Left ventricle myocardium superior (tissue), 1 donor: ENCODE measurements at regions of chr5 and their contacts with region 1.

Region 1: DNA sequence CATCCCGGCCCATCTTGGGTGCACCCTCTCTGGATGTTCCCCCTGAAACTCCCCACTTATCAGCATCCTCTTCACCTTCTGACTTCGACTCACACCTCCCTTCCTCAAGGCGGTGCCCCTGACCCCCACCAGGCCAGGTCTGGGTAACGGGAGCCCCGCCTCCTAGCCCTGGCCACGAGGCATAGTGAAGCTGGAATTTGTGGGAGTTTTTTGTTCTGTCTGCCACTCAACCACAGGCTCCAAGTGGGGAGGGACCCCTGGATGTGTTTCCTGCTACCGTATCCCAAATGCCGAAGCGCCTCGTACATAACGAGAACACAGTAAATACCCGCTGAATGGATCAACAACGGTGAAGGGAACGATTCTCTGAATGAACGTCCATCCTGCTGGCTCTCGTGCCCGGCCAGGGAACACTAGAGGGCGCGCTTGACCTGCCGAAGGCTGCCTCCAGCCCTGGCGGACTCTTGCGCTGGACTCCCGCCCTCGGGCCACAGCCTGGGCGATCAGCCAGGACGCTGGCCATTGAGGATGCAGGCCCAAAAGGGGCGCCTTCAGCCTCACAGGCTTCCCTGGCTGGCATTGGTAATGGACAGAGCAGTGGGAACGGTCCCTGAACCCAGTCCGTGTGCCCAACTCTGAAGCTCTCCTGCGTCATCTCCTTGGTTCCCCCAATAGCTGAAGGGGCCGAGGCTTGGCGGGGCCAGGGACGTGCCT is 47.3 kb upstream of the PHYKPL start:
- DNase-seq: peak; percentile 95
- ATAC-seq: peak; percentile 91

Region 2: GRCh38 chr5:178336889-178337288 is 57.0 kb after region 1 on chr5:
- intact Hi-C with region 1: no loop called
- DNase-seq: no peak
- ATAC-seq: no peak

Region 3: DNA sequence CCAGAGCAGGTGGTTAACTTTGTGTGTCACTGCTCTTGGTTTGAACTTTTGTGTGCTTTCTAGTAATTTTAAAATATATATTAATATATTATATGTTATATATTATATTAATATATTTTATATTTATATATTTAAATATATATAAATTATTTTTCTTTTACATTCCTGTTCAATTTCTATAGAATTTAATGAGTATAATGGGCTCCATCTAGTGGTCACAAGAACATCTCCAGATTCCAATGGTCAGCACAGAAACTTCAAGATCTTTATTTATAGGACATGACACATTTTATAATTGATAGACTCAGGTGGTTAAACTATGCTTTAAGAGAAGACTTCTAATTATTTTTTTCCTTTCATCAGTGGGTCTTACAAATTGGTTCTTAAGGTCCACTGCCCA is 271.2 kb after region 1 on chr5:
- intact Hi-C with region 1: loop called (anchors 5 kb)
- DNase-seq: no peak
- ATAC-seq: no peak